OCI-LY7 (cell line): ENCODE measurements at regions of chr2 and their contacts with region 1.

Region 1: GRCh38 chr2:27890146-27890923 is at the starts of genes BABAM2 and RBKS:
- DNase-seq: peak; percentile 91
- H3K4me3 ChIP-seq: peak within 1 kb of the TSS; percentile 89
- H3K27ac ChIP-seq: peak within 1 kb of the TSS; percentile 74
- H3K4me1 ChIP-seq: peaks cover 36% of the 10 kb centered on the region
- CTCF ChIP-seq: no peak
- total RNA-seq, gene BABAM2: 13.4 and 19.7 TPM in 2 replicates
- total RNA-seq, gene RBKS: 0.88 and 1.1 TPM in 2 replicates

Region 2: GRCh38 chr2:26033818-26034636 is 1856.3 kb before region 1 on chr2 and contains the start of gene RAB10:
- CTCF ChIA-PET with region 1: no interaction called
- POLR2A ChIA-PET with region 1: no interaction called
- intact Hi-C with region 1: loop called (anchors 10 kb)
- DNase-seq: peak; percentile 99
- H3K4me3 ChIP-seq: peak within 1 kb of the TSS; percentile 95
- H3K27ac ChIP-seq: peak within 1 kb of the TSS; percentile 85
- H3K4me1 ChIP-seq: peaks cover 27% of the 10 kb centered on the region
- CTCF ChIP-seq: no peak
- total RNA-seq, gene RAB10: 58.3 and 109 TPM in 2 replicates

Region 3: DNA sequence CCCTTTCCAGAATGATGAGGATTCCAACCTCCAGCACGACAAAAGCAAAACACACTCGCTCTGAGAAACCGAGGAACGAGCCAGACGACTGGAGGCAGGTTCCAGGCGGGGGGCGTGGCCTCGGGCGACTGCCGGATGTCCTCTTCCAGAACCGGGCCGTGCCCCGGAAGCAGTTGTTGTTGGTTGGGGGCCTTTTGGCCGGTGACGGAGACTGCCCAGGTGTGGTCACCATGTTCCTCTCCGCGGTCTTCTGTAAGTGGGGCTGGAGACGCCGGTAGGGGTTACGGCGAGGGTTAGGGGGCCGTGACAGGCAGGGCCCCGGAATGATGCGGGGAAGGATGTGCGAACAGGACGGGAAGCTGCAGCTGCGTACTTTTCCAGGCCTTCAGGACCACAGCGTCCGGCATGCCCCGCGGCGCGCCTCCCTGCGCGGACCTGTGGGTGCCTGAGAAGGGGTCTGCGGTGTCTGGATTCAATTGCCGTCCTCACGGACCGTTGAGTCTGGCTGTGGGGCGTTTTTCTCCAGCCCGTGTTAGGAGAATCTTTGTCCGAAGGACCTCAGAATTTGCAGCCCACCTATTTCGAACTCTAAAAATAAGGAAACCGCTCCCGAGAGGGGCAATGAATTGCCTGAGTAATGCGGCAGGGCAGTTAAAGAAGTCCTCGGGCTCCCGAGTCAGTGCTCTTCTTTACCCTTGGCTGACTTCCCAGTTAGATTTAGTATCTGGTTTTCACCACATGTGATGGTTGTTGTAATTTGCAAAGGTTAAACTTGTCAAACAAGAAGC is 118.6 kb before region 1 on chr2 and contains the start of gene MRPL33:
- CTCF ChIA-PET with region 1: no interaction called
- POLR2A ChIA-PET with region 1: no interaction called
- intact Hi-C with region 1: loop called (anchors 5 kb)
- DNase-seq: peak; percentile 87
- H3K4me3 ChIP-seq: peak within 1 kb of the TSS; percentile 82
- H3K27ac ChIP-seq: peak within 1 kb of the TSS; percentile 7
- H3K4me1 ChIP-seq: peaks cover 12% of the 10 kb centered on the region
- CTCF ChIP-seq: no peak
- total RNA-seq, gene MRPL33: 51.2 and 51.5 TPM in 2 replicates

Region 4: GRCh38 chr2:28392297-28393113 is 502.2 kb after region 1 on chr2 and contains the start of gene FOSL2:
- CTCF ChIA-PET with region 1: no interaction called
- POLR2A ChIA-PET with region 1: no interaction called
- intact Hi-C with region 1: loop called (anchors 2 kb)
- DNase-seq: peak; percentile 84
- H3K4me3 ChIP-seq: peak within 1 kb of the TSS; percentile 74
- H3K27ac ChIP-seq: peak within 1 kb of the TSS; percentile 3
- H3K4me1 ChIP-seq: peaks cover 21% of the 10 kb centered on the region
- CTCF ChIP-seq: no peak
- total RNA-seq, gene FOSL2: 0.03 and 0.35 TPM in 2 replicates